ENCODE measurements at regions of chr20 and their contacts with region 1.

Region 1: DNA sequence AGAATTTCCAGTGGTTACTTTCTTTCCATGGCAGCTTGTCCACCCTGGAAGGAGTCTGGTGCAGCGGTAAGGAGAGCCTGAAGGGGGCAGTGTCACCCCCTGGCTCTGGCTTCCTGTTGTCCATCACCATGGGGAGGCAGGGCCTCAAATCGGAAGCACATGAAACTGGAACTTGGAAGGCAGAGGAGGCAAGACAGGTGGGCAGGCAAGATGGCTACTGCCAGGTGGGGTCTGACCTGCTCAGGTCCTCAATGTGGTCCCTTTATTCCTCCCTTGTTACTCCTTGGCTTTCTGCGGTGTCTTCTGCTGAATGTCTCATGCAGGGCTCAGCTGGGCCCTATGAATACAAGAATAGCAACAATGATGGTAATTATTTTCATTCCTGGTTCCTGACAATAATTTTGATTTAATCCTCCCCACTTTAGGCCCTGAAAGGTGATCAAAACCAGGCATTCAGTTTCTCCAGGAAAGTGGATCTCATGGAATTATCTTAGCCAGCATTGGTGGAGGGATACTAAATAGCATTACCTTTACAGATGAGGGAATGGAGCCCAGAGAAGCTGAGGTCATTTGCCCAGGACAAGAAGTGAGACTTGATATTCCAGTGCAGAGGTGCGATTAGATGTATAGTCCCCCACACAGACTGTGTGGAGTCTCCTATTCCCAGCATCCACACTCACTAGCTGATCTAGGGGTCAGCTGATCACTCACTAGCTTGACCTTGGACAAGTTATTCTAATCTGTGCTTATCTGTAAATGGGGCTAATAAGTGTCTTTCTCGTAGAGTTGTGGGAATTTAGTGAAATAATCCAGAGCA is 17.6 kb upstream of the SNAI1 start:
- DNase-seq: peak; percentile 52 to 54
- H3K4me3 ChIP-seq: no peak overlapping the region
- H3K27ac ChIP-seq: no peak overlapping the region
- H3K4me1 ChIP-seq: peaks cover 25% of the 10 kb centered on the region
- H3K27me3 ChIP-seq: no peaks in the 10 kb centered on the region
- CTCF ChIP-seq: peak; percentile 76

Region 2: GRCh38 chr20:49936153-49937027 is 28.8 kb before region 1 on chr20 and contains the start of gene RNF114:
- CTCF ChIA-PET with region 1: interaction called, 4 read pairs
- POLR2A ChIA-PET with region 1: no interaction called
- intact Hi-C with region 1: loop called (anchors 2 kb)
- DNase-seq: peak; percentile 73 to 85
- H3K4me3 ChIP-seq: peak within 1 kb of the TSS; percentile 92
- H3K27ac ChIP-seq: peak within 1 kb of the TSS; percentile 69
- H3K4me1 ChIP-seq: peaks cover 32% of the 10 kb centered on the region
- H3K27me3 ChIP-seq: no peaks in the 10 kb centered on the region
- CTCF ChIP-seq: 0 out of 2 replicates have a peak, but pooled peaks have one; percentile 28
- total RNA-seq, gene RNF114: 92.5 and 125 TPM in 2 replicates

Region 3: GRCh38 chr20:49989234-49990065 is 24.3 kb after region 1 on chr20:
- CTCF ChIA-PET with region 1: no interaction called
- POLR2A ChIA-PET with region 1: no interaction called
- intact Hi-C with region 1: no loop called
- DNase-seq: no peak
- H3K4me3 ChIP-seq: no peak overlapping the region
- H3K27ac ChIP-seq: no peak overlapping the region
- H3K4me1 ChIP-seq: no peaks in the 10 kb centered on the region
- H3K27me3 ChIP-seq: no peaks in the 10 kb centered on the region
- CTCF ChIP-seq: no peak

Region 4: DNA sequence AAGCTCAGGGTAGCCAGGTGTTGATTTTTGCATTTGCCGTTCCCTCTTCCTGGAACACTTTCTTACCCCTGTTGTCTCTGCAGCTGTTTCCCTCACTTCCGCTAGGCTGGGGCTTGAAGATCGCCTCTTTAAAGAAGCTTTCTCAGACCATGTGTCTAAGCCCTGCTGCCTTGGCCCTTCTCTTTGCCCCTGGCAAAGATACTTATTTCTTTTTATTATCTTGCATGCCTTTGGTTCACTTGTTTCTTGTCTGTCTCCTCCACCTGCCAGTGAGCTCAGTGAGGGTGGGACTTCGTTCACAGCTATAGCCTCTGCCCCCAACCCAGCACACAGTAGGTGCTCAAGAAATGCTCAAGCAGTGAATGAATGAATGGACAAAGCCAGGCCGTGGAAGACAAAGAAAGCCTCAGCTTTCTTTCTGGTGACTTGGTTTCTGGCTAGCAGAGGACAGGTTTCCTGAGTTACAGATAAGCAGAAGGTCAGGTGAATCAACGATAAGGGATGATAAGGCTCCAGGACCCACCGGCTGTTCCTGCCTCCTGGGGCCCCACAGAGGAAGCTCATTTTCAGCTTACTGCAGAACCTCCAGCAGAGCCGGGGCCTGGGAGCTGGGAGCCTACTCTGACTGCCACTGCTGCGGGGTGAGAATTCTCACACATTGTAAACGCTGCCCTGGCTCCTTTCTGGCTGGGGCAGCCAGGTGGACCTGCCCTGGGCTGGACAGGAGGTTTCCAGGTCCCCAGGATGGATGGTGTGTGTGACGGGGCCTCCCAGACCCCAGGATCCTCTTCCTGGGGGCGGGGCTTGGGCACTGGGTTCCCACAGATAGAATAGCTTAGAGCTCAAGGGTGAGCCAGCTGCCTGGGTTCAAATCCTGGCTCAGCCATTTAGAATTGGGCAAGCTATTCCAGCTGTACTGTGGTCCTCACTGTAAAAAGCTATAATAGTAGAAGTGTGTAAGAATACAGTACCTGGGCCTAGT is 47.4 kb after region 1 on chr20:
- CTCF ChIA-PET with region 1: interaction called, 11 read pairs
- POLR2A ChIA-PET with region 1: no interaction called
- intact Hi-C with region 1: no loop called
- DNase-seq: no peak
- H3K4me3 ChIP-seq: no peak overlapping the region
- H3K27ac ChIP-seq: no peak overlapping the region
- H3K4me1 ChIP-seq: no peaks in the 10 kb centered on the region
- H3K27me3 ChIP-seq: no peaks in the 10 kb centered on the region
- CTCF ChIP-seq: no peak

Region 5: DNA sequence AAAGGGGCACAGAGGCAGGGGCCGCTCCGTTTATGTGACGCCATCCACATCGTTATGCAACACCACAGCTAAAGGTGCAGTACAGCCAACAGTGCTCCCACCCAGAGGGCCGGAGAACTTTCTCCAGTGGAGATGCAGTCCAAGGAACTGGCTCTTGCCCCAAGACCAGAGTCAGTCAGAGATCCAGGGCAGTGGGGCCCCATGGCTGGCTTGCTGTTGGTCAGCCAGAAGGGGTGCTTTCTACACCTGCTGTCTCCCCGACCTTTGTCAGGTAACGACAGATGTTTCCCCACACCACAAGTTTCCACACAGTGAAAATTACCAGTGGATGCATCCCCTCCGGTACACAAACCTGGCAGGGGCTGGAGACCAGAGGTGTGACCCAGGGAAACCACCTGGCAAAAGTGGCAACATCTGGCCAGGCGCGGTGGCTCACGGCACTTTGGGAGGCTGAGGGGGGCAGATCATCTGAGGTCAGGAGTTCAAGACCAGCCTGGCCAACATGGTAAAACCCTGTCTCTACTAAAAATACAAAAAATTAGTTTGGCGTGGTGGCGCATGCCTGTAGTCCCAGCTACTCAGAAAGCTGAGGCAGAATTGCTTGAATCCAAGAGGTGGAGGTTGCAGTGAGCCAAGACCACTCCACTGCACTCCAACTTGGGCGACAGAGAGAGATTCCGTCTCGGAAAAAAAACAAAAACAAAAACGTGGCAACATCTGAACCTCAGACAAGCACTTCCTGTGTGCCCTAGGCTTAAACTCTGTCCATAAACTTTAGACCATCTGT is 112.8 kb after region 1 on chr20:
- CTCF ChIA-PET with region 1: no interaction called
- POLR2A ChIA-PET with region 1: interaction called, 22 read pairs
- intact Hi-C with region 1: no loop called
- DNase-seq: no peak
- H3K4me3 ChIP-seq: no peak overlapping the region
- H3K27ac ChIP-seq: no peak overlapping the region
- H3K4me1 ChIP-seq: peaks cover 7% of the 10 kb centered on the region
- H3K27me3 ChIP-seq: no peaks in the 10 kb centered on the region
- CTCF ChIP-seq: no peak